ENCODE measurements at regions of chr4 and their contacts with region 1.

Region 1: DNA sequence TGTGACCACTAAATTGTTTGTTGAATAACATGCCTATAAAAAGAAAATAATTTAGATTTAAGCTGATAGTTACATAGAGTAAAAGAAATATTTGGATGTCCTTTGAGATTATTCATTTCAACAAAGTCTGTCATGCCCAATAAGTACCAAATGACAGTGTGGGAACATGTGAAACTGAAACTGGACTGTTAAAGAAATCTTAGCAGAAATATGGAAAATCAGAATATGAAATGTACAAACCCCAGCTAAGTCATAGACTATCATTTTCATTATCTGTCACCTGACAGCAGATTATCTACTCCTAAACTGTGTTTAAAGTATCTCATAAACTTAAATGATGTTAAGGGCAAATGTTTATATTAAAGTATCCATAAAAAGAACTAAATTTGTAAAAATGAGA is 437.8 kb upstream of the FAM241A start:
- DNase-seq: no peak
- H3K4me3 ChIP-seq: no peak overlapping the region
- H3K27ac ChIP-seq: no peak overlapping the region
- H3K4me1 ChIP-seq: no peaks in the 10 kb centered on the region
- H3K27me3 ChIP-seq: no peaks in the 10 kb centered on the region
- CTCF ChIP-seq: no peak
- POLR2A ChIP-seq: no peak

Region 2: GRCh38 chr4:111537871-111538270 is 169.6 kb before region 1 on chr4:
- intact Hi-C with region 1: loop called (anchors 10 kb)
- DNase-seq: no peak
- H3K4me3 ChIP-seq: no peak overlapping the region
- H3K27ac ChIP-seq: no peak overlapping the region
- H3K4me1 ChIP-seq: no peaks in the 10 kb centered on the region
- H3K27me3 ChIP-seq: no peaks in the 10 kb centered on the region
- CTCF ChIP-seq: no peak
- POLR2A ChIP-seq: no peak